HEK293 (cell line): ENCODE measurements at regions of chr1 and their contacts with region 1.

Region 1: DNA sequence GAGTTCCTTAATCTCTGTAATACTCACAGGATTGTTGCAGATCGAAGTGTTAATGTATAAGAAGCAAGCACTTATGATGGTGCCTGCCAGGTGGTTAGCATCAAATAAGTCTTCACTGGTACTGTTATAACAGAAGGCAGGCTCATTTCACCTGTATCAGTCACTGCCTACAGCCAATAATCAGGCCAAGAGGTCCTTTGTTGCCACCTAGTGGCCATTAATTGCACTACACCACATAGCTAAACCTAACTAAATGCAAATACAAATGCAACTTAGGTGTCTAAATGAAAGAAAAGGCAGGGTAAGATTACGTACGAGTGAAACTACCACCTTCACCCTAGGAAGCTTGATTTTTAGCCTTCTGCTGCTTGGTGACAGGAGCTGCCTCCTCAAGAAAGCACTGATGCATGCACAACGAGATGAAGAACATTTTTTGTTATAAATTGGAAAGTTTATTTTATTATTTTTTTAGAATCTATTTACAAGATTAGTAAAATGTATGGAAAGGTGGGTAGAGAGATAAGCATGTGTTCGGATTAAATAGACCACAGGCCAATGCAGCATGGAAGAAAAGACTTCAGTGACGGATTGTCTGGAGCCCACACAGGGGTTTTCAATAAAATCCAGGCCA is 334.8 kb upstream of the CAMK1G start:
- H3K4me3 ChIP-seq: no peak overlapping the region
- H3K27ac ChIP-seq: no peak overlapping the region
- H3K4me1 ChIP-seq: no peaks in the 10 kb centered on the region
- CTCF ChIP-seq: peak; percentile 62

Region 2: DNA sequence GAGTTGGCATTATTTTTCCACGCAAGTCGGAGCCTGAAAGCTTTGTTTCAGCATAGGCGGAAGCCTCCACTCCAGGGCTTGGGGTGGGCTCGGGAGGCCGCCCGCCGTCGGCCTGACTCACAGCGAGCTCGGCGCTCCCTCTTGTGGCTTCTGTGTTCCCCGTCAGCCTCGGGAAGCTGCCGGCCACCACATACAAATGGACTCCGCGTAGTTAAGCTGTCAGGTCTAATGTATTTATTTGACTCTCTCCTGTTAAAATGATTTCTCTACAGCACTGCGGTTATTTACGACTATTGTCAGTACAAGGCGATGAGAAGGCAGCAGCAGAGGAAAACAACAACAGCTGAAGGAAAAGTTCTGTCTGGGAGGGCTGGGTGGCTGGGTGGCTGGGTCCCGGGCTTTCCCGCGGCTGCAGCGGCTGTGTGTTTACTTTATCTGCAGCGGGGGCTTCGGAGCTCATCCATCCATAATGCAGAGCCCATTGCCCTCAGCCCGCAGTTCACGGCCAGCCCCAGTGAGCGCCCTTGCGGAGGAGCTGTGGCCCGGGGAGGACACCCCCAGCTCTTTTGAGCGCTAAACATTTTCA is 41.0 kb before region 1 on chr1:
- CTCF ChIA-PET with region 1: interaction called, 40 read pairs
- POLR2A ChIA-PET with region 1: no interaction called
- H3K4me3 ChIP-seq: peak overlapping the region; percentile 43
- H3K27ac ChIP-seq: no peak overlapping the region
- H3K4me1 ChIP-seq: no peaks in the 10 kb centered on the region
- CTCF ChIP-seq: peak; percentile 88

Region 3: DNA sequence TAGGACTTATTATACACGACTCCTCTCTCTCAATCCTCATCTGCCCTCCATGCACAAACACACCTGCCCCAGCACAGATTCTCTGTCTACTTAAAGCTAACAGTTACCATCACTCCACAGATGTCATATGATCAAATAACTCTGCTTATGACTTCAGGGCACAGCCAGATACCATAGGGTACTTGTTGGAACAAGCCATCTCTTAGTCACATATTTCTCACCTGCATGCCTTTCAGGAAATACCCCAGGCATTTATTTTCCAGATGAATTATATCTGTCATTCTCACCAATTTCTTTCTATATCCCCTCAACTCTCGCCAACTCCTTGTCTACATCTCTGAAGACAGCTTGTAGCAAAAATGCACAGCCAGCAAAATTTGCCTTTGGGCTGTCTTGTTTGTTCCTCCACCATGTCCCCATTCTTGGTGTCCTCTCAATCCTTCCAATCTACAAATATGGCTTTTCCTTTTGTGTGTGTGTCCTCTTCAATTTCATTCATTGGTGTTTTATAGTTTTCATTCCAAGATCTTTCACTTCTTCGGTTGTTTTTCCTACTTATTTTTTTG is 19.2 kb before region 1 on chr1:
- CTCF ChIA-PET with region 1: interaction called, 19 read pairs
- POLR2A ChIA-PET with region 1: no interaction called
- H3K4me3 ChIP-seq: no peak overlapping the region
- H3K27ac ChIP-seq: no peak overlapping the region
- H3K4me1 ChIP-seq: no peaks in the 10 kb centered on the region
- CTCF ChIP-seq: no peak

Region 4: GRCh38 chr1:209235166-209235565 is 13.6 kb before region 1 on chr1:
- CTCF ChIA-PET with region 1: interaction called, 19 read pairs
- POLR2A ChIA-PET with region 1: no interaction called
- H3K4me3 ChIP-seq: no peak overlapping the region
- H3K27ac ChIP-seq: no peak overlapping the region
- H3K4me1 ChIP-seq: no peaks in the 10 kb centered on the region
- CTCF ChIP-seq: no peak

Region 5: GRCh38 chr1:209260136-209260535 is 11.4 kb after region 1 on chr1:
- CTCF ChIA-PET with region 1: interaction called, 16 read pairs
- POLR2A ChIA-PET with region 1: no interaction called
- H3K4me3 ChIP-seq: no peak overlapping the region
- H3K27ac ChIP-seq: no peak overlapping the region
- H3K4me1 ChIP-seq: no peaks in the 10 kb centered on the region
- CTCF ChIP-seq: no peak

Region 6: DNA sequence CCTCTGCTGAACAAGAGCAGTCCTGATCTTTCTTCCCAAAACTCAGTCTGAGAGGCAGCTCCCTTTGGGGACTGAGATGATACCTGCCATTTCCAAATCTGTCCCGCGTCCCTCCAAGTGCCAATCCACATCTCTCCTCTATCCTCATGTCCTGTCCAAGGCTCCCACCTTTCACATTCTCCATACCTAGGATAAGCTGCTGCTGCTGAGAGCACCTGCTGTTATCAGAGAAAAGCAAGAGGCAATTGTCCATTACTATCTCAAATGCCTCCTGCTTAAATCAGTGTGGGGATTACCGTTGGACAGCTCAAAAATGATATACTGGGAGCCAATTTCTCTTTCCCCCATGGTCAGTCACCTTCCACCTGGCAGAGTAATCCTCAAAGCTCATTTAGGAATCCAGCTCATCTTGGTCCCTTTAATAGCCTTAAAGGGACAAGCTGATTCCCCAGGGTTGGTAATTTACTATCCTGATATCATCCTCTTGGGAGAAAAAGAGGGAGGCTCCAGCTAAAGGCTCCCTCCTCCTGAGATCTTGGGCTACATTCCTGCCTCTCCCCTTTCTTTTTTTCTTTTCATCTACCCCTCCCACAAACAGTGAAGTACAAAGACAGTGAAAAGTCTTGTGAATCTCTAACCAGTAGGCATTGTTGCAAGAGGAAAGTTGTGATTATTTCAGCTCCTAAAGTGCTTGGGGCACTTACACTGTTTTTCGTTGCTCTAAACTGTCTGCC is 56.6 kb after region 1 on chr1:
- CTCF ChIA-PET with region 1: interaction called, 10 read pairs
- POLR2A ChIA-PET with region 1: no interaction called
- H3K4me3 ChIP-seq: no peak overlapping the region
- H3K27ac ChIP-seq: no peak overlapping the region
- H3K4me1 ChIP-seq: no peaks in the 10 kb centered on the region; the same call in 1 of the 2 replicates
- CTCF ChIP-seq: no peak

Region 7: GRCh38 chr1:209354111-209354839 is 105.5 kb after region 1 on chr1:
- CTCF ChIA-PET with region 1: interaction called, 45 read pairs
- POLR2A ChIA-PET with region 1: no interaction called
- H3K4me3 ChIP-seq: no peak overlapping the region
- H3K27ac ChIP-seq: no peak overlapping the region
- H3K4me1 ChIP-seq: no peaks in the 10 kb centered on the region
- CTCF ChIP-seq: peak; percentile 73; the same call in 1 of the 2 replicates

Region 8: GRCh38 chr1:209380420-209380819 is 131.7 kb after region 1 on chr1:
- CTCF ChIA-PET with region 1: no interaction called
- POLR2A ChIA-PET with region 1: no interaction called
- H3K4me3 ChIP-seq: no peak overlapping the region
- H3K27ac ChIP-seq: no peak overlapping the region
- H3K4me1 ChIP-seq: no peaks in the 10 kb centered on the region
- CTCF ChIP-seq: no peak